Mammary epithelial cell (primary cell): ENCODE measurements at regions of chr12 and their contacts with region 1.

Region 1: GRCh38 chr12:106223485-106224354 is 24.1 kb downstream of the CKAP4 start:
- DNase-seq: peak; percentile 45
- H3K4me3 ChIP-seq: no peak overlapping the region
- H3K27ac ChIP-seq: no peak overlapping the region
- H3K4me1 ChIP-seq: peaks cover 14% of the 10 kb centered on the region
- H3K27me3 ChIP-seq: no peaks in the 10 kb centered on the region
- CTCF ChIP-seq: peak; percentile 94 to 95

Region 2: GRCh38 chr12:105705765-105706164 is 518.0 kb before region 1 on chr12:
- CTCF ChIA-PET with region 1: no interaction called
- dilution Hi-C with region 1: no loop called
- in situ Hi-C with region 1: no loop called
- intact Hi-C with region 1: loop called (anchors 5 kb)
- DNase-seq: peak; percentile 30
- H3K4me3 ChIP-seq: no peak overlapping the region
- H3K27ac ChIP-seq: no peak overlapping the region
- H3K4me1 ChIP-seq: peaks cover 8% of the 10 kb centered on the region
- H3K27me3 ChIP-seq: no peaks in the 10 kb centered on the region
- CTCF ChIP-seq: peak; percentile 74 to 80

Region 3: DNA sequence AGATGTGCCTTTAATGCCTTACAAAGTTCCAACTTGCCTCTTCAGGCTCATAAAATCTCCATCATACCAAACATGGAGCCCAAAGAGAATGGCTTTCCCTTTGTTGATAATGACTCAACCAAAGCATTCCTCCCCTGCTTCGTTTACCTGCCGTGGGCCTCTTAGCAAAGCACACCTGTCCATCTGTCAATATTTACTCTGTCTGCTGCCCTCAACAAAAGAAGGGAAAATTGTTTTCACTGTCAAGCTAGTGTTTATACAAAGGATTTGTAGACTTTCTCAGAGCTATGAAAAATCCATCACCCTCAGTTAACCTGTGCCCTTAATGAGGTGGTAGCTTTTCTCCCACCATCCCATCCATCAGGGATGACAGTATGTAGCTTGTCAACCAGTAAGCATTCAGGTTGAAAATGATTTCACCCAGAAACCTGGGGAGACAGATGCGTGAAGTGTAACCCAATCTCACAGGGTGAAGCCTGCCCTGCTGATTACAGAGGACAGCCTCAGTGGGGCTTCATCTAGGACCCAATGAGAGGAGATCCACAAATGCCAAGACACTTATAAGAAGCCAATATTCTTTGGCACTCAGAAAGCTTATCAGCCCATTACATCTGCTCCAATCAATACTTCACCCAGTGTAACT is 363.0 kb before region 1 on chr12:
- CTCF ChIA-PET with region 1: no interaction called
- dilution Hi-C with region 1: no loop called
- in situ Hi-C with region 1: no loop called
- intact Hi-C with region 1: no loop called
- DNase-seq: no peak
- H3K4me3 ChIP-seq: no peak overlapping the region
- H3K27ac ChIP-seq: no peak overlapping the region
- H3K4me1 ChIP-seq: no peaks in the 10 kb centered on the region
- H3K27me3 ChIP-seq: no peaks in the 10 kb centered on the region
- CTCF ChIP-seq: no peak

Region 4: GRCh38 chr12:106247674-106248311 is 24.1 kb after region 1 on chr12 and contains the start of gene CKAP4:
- CTCF ChIA-PET with region 1: no interaction called
- dilution Hi-C with region 1: no loop called
- in situ Hi-C with region 1: no loop called
- intact Hi-C with region 1: loop called (anchors 1 kb)
- DNase-seq: peak; percentile 37
- H3K4me3 ChIP-seq: peak within 1 kb of the TSS; percentile 54 to 91 (median 87)
- H3K27ac ChIP-seq: peak within 1 kb of the TSS; percentile 45
- H3K4me1 ChIP-seq: peaks cover 17% of the 10 kb centered on the region
- H3K27me3 ChIP-seq: no peaks in the 10 kb centered on the region
- CTCF ChIP-seq: no peak
- total RNA-seq, gene CKAP4: 88.4 to 123 TPM

Region 5: DNA sequence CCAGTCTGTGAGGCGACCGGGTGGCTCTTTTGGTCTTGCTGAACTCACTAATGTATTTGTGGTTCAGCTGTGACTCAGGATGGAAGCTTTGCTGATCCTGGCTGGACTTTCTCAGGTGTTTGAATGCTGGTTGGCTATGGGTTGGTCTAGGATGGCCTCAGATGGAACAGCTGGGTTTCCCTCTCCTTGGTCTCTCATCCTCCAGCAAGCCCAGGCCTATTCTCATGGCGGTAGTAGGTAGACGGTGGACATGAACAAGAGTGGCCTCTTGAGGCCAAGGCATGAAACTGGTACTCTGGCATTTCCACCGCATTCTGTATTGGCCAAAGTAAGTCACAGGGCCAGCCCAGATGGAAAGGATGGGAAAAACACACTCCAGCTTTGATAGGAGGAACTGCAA is 122.0 kb after region 1 on chr12:
- CTCF ChIA-PET with region 1: interaction called, 11 read pairs
- dilution Hi-C with region 1: no loop called
- in situ Hi-C with region 1: loop called in 1 of 2 experiments (anchors 10 kb)
- intact Hi-C with region 1: loop called (anchors 1 kb)
- DNase-seq: peak; percentile 96
- H3K4me3 ChIP-seq: no peak overlapping the region
- H3K27ac ChIP-seq: peak overlapping the region; percentile 2
- H3K4me1 ChIP-seq: peaks cover 13% of the 10 kb centered on the region
- H3K27me3 ChIP-seq: no peaks in the 10 kb centered on the region
- CTCF ChIP-seq: peak; percentile 59 to 68

Region 6: DNA sequence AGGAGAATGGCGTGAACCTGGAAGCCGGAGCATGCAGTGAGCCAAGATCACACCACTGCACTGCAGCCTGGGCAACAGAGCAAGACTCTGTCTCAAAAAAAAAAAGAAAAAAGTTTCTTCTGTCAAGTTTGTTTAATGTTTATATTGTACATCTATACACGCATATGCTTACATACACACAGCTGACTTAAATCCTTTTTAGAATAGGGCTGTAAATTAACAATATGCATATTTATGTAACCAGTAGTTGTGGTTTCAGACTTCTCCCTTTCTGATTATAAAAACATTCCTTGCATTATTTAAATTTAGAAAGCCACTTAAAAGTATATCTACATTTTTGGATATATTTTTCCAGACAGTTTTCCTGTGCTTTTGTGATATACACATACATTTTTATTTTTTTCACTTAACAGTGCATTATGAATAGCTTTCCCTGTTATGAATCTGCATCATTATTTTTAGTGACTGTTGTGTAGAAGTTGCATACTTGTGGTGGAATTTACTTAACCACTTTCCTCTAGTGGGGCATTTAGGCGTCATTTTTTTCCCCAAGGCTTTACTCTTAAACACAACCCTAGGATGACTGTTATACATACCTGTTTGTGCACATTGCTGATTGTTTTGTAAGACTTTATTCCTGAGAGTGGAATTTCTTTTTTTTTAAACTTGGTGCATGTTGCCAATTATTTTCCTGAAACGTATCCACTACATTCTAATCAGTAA is 163.3 kb after region 1 on chr12:
- CTCF ChIA-PET with region 1: no interaction called
- dilution Hi-C with region 1: no loop called
- in situ Hi-C with region 1: no loop called
- intact Hi-C with region 1: loop called (anchors 1 kb)
- DNase-seq: peak; percentile 76
- H3K4me3 ChIP-seq: no peak overlapping the region
- H3K27ac ChIP-seq: no peak overlapping the region
- H3K4me1 ChIP-seq: no peaks in the 10 kb centered on the region
- H3K27me3 ChIP-seq: no peaks in the 10 kb centered on the region
- CTCF ChIP-seq: no peak